ENCODE measurements at regions of chr15 and their contacts with region 1.

Region 1: DNA sequence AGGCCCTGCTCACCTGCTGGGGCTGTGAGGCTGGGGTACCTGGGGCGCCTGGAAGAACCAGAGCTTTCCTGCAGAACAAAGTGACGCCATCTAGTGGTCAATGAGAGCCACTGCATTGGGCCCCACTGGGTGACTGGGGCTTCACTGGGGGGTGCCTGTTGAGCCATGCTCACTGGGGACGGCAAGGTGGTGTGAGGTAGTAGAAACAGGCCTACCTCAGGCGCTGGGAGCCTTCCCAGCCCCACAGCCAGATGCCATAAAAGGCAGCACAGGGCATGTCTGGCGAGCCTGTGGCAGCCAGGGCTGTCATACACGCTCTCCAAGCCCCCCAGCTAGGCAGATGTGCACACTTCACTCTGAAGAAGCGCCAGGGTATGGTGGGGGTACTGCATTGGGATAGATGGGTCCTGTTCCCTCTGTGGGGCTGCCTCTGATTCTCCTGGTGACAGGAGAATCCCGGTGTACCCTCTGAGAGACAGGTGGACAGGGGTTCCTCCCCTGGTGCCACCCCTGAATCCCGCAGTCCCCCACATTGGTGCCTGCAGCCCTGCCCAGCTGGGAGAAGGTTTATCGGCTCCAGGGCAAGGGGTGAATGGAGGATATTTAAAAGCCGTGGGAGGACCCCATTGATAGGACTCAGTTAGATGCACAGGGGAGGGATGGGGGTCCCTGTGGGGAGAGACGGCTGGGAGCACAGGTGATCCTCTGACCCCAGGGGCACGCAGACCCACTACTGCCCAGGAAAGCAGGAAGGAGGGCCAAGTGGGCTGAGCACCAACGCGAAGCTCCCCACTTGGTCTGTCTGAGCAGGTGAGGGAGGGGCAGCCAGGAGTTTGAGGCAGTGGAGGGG is 178.8 kb downstream of the NSMCE3 start:
- DNase-seq: peak; percentile 68
- ATAC-seq: peak; percentile 73
- H3K4me3 Mint-ChIP-seq: peak overlapping the region; percentile 34
- H3K27ac Mint-ChIP-seq: peak overlapping the region; percentile 71
- H3K4me1 Mint-ChIP-seq: peaks cover 25% of the 10 kb centered on the region
- H3K27me3 Mint-ChIP-seq: no peaks in the 10 kb centered on the region
- CTCF ChIP-seq: peak; percentile 89

Region 2: DNA sequence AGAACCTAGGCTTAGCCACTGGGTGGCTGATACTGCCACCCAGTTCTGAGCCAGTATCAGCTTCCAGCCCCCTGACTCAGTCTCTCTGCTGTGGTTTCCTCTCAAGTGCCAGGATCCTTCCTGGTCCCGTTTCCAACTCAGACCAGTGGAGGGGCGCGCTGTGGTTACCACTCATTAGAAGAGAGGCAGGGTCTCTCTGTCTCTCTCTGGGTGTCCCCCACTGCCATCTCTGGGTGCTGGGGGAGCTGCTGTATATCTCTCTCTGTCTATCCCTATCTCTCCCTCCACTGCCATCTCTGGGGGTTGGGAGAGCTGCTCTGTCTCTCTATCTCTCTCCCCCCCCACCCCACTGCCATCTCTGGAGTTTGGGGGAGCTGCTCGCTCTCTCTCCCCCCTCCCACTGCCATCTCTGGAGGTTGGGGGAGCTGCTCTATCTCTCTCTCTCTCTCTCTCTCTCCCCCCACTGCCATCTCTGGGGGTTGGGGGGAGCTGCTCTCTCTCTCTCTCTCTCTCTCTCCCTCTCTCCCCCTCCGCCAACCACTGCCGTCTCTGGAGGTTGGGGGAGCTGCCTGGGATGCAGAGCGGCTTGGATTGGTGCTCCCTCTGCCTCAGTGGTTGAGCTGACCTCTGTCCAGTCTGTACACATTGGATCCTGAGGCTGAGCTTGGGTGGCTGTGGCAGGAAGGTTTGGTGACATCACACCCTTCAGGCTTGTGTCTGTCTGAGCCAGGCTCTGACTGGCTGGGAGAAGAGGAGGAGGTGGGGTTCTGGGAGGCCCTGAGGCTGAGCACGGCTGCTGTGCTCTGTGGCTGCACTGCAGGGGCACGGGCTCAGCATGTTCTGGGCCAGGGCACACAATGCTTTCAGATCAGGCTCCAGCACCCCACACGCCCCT is 106.2 kb before region 1 on chr15:
- CTCF ChIA-PET with region 1: interaction called, 25 read pairs
- POLR2A ChIA-PET with region 1: no interaction called
- intact Hi-C with region 1: loop called (anchors 10 kb)
- DNase-seq: peak; percentile 52
- ATAC-seq: peak; percentile 85
- H3K4me3 Mint-ChIP-seq: no peak overlapping the region
- H3K27ac Mint-ChIP-seq: peak overlapping the region; percentile 68
- H3K4me1 Mint-ChIP-seq: peaks cover 29% of the 10 kb centered on the region
- H3K27me3 Mint-ChIP-seq: no peaks in the 10 kb centered on the region
- CTCF ChIP-seq: no peak

Region 3: GRCh38 chr15:29014493-29014892 is 76.3 kb before region 1 on chr15:
- CTCF ChIA-PET with region 1: interaction called, 21 read pairs
- POLR2A ChIA-PET with region 1: no interaction called
- intact Hi-C with region 1: no loop called
- DNase-seq: no peak
- ATAC-seq: peak; percentile 24
- H3K4me3 Mint-ChIP-seq: no peak overlapping the region
- H3K27ac Mint-ChIP-seq: no peak overlapping the region
- H3K4me1 Mint-ChIP-seq: peaks cover 44% of the 10 kb centered on the region
- H3K27me3 Mint-ChIP-seq: no peaks in the 10 kb centered on the region
- CTCF ChIP-seq: no peak

Region 4: DNA sequence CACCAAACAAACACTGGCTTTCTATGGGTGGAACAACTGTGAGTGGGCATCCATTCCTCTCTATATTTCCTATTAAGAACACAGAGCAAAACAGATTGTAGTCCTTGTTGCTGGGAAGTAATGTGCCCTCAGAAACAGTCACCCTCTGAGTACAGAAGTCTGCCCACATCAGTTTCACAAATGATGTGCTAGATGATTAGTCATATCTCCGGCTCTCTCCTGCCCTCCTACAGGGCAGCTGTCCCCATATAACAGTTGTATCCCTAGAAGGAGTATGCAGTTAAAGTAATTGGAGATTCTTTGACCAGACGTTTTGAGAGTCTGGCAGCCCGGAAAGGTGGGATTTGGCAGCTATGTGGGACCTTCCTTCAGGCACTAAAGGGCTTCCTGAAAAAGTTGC is 45.1 kb before region 1 on chr15:
- CTCF ChIA-PET with region 1: interaction called, 22 read pairs
- POLR2A ChIA-PET with region 1: no interaction called
- intact Hi-C with region 1: no loop called
- DNase-seq: peak; percentile 50
- ATAC-seq: peak; percentile 99
- H3K4me3 Mint-ChIP-seq: no peak overlapping the region
- H3K27ac Mint-ChIP-seq: peak overlapping the region; percentile 64
- H3K4me1 Mint-ChIP-seq: peaks cover 50% of the 10 kb centered on the region
- H3K27me3 Mint-ChIP-seq: no peaks in the 10 kb centered on the region
- CTCF ChIP-seq: no peak

Region 5: DNA sequence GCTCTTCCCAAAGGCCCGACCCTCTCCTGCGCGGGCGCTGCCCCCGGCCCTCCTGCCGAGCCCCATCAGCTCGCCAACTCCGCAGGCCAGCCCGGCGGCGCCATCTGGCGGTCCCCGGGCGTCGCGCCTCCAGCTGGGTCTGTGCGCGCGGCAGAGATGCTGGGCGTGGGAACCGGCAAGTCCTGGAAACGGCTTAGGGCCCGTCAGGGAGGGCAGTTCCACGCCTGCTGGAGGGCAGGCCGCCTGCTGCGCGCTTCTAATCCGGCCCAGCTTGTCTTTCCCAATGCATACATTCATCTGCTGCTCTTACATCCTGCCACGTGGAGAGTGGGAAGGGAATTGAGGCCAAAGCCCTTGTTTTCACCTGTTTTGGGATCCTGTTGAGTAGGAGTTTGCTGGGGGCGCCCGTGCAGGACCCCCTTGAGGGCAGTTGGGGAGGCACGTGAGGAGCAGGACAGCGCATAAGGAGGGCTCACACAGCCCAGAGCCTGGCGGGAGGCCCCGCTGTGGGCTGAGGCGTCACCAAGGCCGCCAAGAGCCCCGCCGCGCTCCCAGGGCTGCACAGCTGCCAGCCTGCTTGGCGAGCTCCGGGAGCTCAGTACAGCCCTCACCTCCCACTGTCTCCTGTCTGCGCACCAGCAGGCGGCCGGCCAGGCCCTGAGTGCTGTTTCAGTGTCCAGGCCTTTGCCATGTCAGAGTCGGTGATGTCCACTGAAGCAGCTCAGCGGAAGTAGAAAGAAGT is 13.2 kb after region 1 on chr15:
- CTCF ChIA-PET with region 1: interaction called, 90 read pairs
- POLR2A ChIA-PET with region 1: no interaction called
- intact Hi-C with region 1: no loop called
- DNase-seq: peak; percentile 72
- ATAC-seq: peak; percentile 87
- H3K4me3 Mint-ChIP-seq: peak overlapping the region; percentile 16
- H3K27ac Mint-ChIP-seq: no peak overlapping the region
- H3K4me1 Mint-ChIP-seq: peaks cover 5% of the 10 kb centered on the region
- H3K27me3 Mint-ChIP-seq: no peaks in the 10 kb centered on the region
- CTCF ChIP-seq: peak; percentile 75

Region 6: DNA sequence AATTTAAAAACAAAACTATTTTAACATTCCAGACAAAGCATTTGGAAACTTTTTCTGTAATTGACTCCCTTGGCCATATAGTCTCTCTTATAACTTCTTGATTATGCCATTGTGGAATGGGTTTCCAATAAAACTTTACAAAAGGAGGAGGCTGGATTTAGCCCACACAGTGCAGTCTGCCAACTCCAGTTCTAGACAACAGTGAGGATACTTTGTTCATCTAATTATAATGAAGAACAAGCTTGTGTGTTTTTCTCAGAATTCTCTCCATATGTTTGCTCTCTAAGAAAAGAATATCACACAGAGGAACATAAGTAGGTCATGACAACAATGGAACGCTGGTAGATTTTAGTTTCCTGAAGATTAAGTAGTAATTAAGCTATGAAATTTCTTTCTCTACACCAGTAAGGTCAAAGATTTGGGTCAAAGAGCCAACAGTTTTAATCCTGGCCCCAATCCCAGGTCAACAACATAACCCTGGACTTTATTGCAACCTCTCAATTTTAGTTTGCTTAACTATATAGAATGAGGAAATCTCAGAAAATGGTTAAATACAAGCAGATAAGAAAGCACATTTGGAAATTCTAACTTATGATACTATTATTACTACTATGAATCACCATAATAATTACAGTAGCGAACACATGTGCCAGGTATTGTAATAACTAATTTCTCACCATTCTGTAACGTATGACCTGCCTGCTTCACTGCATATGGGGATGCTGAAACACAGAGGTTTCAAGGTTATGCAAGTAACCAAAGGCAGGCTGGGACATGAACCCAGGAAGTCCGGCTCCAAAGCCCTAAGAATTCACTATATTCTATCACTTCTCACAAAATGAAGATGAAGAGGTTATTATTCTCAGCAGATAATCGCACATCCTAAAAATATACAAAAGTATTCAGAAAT is 665.8 kb after region 1 on chr15:
- CTCF ChIA-PET with region 1: no interaction called
- POLR2A ChIA-PET with region 1: no interaction called
- intact Hi-C with region 1: no loop called
- DNase-seq: no peak
- ATAC-seq: no peak
- H3K4me3 Mint-ChIP-seq: no peak overlapping the region
- H3K27ac Mint-ChIP-seq: no peak overlapping the region
- H3K4me1 Mint-ChIP-seq: no peaks in the 10 kb centered on the region
- H3K27me3 Mint-ChIP-seq: peaks cover 1% of the 10 kb centered on the region
- CTCF ChIP-seq: no peak

Measured in activated CD8-positive, alpha-beta T cell treated with anti-CD3 and anti-CD28 coated beads for 36 hours (primary cell).